Esophagus muscularis mucosa (tissue), 4 donors: ENCODE measurements at regions of chr1 and their contacts with region 1.

Region 1: GRCh38 chr1:203558064-203558760 is 64.3 kb downstream of the OPTC start:
- DNase-seq: no peak
- H3K4me3 ChIP-seq: no peak overlapping the region
- H3K27ac ChIP-seq: peak overlapping the region; percentile 85 to 94 (median 91)
- H3K4me1 ChIP-seq: peaks cover 51 to 76% (median 66%) of the 10 kb centered on the region in 4 donors
- H3K27me3 ChIP-seq: no peaks in the 10 kb centered on the region
- CTCF ChIP-seq: no peak
- EP300 ChIP-seq: peak; percentile 58
- POLR2A ChIP-seq: no peak

Region 2: GRCh38 chr1:203519078-203519770 is 39.0 kb before region 1 on chr1:
- intact Hi-C with region 1: loop called (anchors 5 kb)
- DNase-seq: no peak
- H3K4me3 ChIP-seq: no peak overlapping the region
- H3K27ac ChIP-seq: no peak overlapping the region
- H3K4me1 ChIP-seq: peaks cover 22 to 92% (median 56%) of the 10 kb centered on the region in 4 donors
- H3K27me3 ChIP-seq: no peaks in the 10 kb centered on the region
- CTCF ChIP-seq: no peak
- EP300 ChIP-seq: no peak
- POLR2A ChIP-seq: no peak